ENCODE measurements at regions of chr3 and their contacts with region 1.

Region 1: DNA sequence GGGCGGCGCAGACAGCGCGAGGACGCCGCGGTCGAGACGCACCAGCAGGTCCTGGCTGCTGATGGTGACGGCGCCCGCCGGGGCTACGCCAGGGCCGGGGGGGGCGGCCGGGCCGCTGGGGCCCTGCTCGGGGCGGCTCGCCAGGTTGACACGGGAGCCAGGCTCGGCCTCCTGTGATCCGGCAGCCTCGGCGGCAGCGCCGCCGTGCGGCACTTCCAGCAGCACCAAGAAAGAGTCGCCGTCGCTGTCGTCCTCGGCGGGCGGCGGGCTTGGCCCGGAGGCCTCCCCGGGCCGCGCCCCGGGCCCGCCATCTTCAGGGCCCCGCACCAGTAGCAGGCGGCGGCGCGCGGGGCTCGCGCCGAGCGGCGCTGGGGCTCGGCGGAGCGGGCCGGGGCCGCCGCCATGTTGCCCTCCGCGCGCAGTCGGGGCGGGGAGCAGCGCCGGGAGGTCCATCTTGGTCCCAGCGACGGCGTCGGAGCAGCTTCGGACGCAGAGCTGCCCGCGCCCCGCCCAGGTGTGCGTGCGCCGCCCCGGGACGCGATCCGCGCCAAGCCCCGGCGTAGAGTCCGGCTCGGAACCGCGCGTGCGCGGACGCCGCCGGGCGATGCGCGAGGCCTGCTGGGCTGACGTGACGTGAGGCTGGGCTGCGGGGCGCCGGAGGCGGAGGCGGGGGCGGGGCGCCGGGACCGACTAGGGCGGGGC is at the start of gene ZXDC:
- DNase-seq: peak; percentile 91
- ATAC-seq: peak; percentile 87
- H3K4me3 ChIP-seq: peak within 1 kb of the TSS; percentile 77
- H3K27ac ChIP-seq: no peak within 1 kb of the TSS
- H3K4me1 ChIP-seq: peaks cover 20% of the 10 kb centered on the region
- H3K27me3 ChIP-seq: no peaks in the 10 kb centered on the region
- CTCF ChIP-seq: no peak
- total RNA-seq, gene ZXDC: 15.4 and 18.7 TPM in 2 replicates

Region 2: DNA sequence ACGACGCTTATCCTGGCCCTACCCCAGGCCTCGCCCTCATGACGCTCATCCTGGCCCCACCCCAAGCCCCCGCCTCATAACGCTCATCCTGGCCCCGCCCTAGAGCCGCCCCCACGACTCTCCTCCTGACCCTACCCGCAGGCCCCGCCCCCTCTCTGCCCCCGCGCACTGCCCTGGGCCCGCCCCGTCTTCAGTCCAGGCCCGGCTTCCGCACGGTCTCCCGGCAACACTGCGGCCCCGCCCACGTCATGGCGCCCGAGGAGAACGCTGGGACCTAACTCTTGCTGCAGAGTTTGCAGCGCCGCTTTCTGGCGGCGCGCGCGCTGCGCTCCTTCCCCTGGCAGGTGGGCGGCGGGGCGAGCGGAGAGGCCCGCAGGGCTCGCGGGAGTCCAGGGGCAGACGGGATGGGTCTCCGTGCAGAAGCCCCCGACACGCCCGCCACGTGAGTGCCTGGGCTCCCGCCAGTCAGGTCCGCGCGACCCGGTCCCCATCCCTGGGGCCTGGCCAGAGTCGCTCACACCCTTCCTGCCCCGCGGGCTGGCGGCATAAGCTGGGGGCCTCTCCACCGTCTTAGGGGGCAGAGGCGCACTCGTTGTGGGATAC is 559.1 kb before region 1 on chr3:
- CTCF ChIA-PET with region 1: no interaction called
- POLR2A ChIA-PET with region 1: no interaction called
- intact Hi-C with region 1: loop called (anchors 5 kb)
- DNase-seq: peak; percentile 74
- ATAC-seq: peak; percentile 82
- H3K4me3 ChIP-seq: peak overlapping the region; percentile 70
- H3K27ac ChIP-seq: peak overlapping the region; percentile 86
- H3K4me1 ChIP-seq: no peaks in the 10 kb centered on the region; the same call in 1 of the 2 replicates
- H3K27me3 ChIP-seq: no peaks in the 10 kb centered on the region
- CTCF ChIP-seq: no peak

Region 3: DNA sequence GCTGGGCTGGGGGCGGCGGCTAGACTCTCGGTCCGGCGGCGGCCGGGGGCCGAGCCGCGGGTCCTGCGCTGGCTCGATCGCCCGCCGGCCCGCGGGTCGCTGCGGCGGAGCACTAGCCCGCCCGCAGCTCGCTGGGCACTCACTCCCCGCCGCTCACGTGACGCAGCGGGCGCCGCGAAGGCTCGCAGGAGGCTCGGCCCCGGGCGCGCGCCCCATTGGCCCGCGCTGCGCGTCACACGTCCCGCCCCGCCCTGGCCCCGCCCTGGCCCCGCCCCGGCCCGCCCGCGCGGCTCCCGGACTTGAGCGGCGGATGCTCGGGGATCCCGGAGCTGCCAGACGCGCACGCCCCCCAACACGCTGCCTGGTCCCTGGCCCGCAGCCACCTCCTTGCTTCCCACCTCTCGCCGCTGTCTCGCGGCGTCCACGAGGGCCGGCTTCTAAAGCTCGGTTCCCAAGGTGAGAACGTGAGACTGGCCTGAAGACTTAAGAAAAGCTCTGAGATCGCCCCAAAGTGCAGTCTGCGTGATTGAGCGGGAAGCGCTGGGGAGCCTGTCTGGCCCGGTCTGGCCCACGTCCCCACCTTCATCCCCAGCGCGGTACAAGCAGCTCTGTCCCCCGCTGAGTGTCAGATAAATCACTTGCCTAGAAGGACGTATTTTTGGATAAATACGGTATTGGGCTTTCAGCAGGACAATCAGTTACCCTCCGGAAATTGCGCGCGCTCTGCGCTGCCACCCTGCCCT is 118.1 kb before region 1 on chr3 and contains the start of gene KLF15:
- CTCF ChIA-PET with region 1: no interaction called
- POLR2A ChIA-PET with region 1: no interaction called
- intact Hi-C with region 1: no loop called
- DNase-seq: peak; percentile 63
- ATAC-seq: peak; percentile 85
- H3K4me3 ChIP-seq: peak within 1 kb of the TSS; percentile 63
- H3K27ac ChIP-seq: no peak within 1 kb of the TSS
- H3K4me1 ChIP-seq: peaks cover 6% of the 10 kb centered on the region; the same call in 1 of the 2 replicates
- H3K27me3 ChIP-seq: peaks cover 30% of the 10 kb centered on the region
- CTCF ChIP-seq: no peak
- total RNA-seq, gene KLF15: 0.12 TPM in 1 of 2 replicates, not detected in the other

Region 4: GRCh38 chr3:126446791-126447190 is 28.8 kb before region 1 on chr3:
- CTCF ChIA-PET with region 1: no interaction called
- POLR2A ChIA-PET with region 1: no interaction called
- intact Hi-C with region 1: no loop called
- DNase-seq: no peak
- ATAC-seq: no peak
- H3K4me3 ChIP-seq: no peak overlapping the region
- H3K27ac ChIP-seq: no peak overlapping the region
- H3K4me1 ChIP-seq: no peaks in the 10 kb centered on the region
- H3K27me3 ChIP-seq: no peaks in the 10 kb centered on the region
- CTCF ChIP-seq: no peak

Measured in PC-3 (cell line).